Esophagus squamous epithelium (tissue), 5 donors: ENCODE measurements at regions of chr10 and their contacts with region 1.

Region 1: GRCh38 chr10:69515699-69516259 is 57.4 kb downstream of the NEUROG3 start:
- DNase-seq: no peak
- H3K4me3 ChIP-seq: no peak overlapping the region
- H3K27ac ChIP-seq: no peak overlapping the region
- H3K4me1 ChIP-seq: peaks cover 0 to 4% (median 0%) of the 10 kb centered on the region in 3 donors
- H3K27me3 ChIP-seq: no peaks in the 10 kb centered on the region
- CTCF ChIP-seq: peak; percentile 41 to 92 (median 77)
- POLR2A ChIP-seq: no peak

Region 2: DNA sequence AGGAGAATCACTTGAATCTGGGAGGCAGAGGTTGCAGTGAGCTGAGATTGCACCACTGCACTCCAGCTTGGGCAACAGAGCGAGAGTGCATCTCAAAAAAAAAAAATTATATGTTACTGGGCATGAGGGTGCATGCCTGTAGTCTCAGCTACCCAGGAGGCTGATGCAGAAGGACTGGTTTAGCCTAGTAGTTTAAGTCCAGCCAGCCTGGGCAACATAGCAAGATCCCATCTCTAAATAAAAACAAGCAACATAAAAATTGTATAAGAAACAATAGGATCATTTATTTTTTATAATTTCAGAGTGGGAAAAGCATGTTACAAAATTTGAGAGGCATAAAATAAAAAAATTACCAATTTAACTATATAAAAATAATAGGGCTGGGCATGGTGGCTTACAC is 810.2 kb before region 1 on chr10:
- intact Hi-C with region 1: no loop called
- DNase-seq: no peak
- H3K4me3 ChIP-seq: no peak overlapping the region
- H3K27ac ChIP-seq: no peak overlapping the region
- H3K4me1 ChIP-seq: no peaks in the 10 kb centered on the region
- H3K27me3 ChIP-seq: no peaks in the 10 kb centered on the region
- CTCF ChIP-seq: no peak
- POLR2A ChIP-seq: no peak

Region 3: GRCh38 chr10:69413221-69413865 is 102.4 kb before region 1 on chr10:
- intact Hi-C with region 1: no loop called
- DNase-seq: no peak
- H3K4me3 ChIP-seq: peak overlapping the region in 1 of 4 donors; percentile 58
- H3K27ac ChIP-seq: peak overlapping the region in 3 of 4 donors; percentile 65 to 94 (median 84)
- H3K4me1 ChIP-seq: peaks cover 5 to 42% (median 11%) of the 10 kb centered on the region in 3 donors
- H3K27me3 ChIP-seq: no peaks in the 10 kb centered on the region
- CTCF ChIP-seq: peak; percentile 31 to 69 (median 52)
- POLR2A ChIP-seq: no peak

Region 4: DNA sequence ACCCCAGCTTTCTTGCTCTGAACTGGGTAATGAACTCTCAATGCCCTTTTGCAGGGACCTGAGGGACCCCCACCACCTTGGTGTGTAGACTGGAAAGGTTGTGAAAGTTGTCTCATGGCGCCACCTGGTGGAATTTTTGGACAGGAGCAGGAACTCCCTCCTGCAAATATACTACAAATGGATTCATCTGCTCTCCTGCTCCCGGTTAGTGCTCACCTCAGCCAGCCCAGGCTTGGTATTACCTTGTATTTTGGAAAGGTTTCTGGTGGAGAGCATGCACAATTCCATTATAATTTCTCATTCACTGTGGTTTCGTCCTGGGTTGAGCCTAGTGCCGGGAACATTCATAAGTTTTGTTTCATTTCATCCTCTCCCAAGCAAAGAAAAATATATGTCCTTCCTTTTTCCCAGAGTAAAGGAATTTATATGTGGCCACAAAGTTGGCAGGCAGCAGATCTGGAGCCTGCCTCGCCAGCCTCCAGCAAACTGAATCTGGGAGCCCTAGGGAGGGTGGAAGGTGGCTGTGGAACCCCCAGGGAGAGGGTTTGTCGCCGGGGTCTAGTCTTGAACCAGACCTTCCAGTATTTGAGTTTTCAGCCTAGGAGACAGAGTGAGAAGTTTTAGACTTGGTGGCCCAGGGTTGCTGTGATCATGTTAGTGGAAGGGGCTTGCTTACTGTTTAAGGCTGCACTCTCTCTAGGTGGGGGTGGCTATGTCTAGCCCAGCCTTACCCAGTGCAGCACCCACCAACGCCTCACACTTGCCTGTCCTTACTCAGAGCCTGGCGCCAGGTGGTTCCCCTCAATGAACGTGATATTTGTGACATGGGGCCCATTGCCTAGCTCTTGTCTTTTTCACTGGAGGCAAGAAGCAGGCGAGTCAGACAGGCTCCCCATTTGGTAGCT is 123.8 kb after region 1 on chr10:
- intact Hi-C with region 1: loop called (anchors 5 kb)
- DNase-seq: peak; percentile 11
- H3K4me3 ChIP-seq: peak overlapping the region in 1 of 4 donors; percentile 12
- H3K27ac ChIP-seq: peak overlapping the region; percentile 68 to 77 (median 74)
- H3K4me1 ChIP-seq: peaks cover 8 to 46% (median 23%) of the 10 kb centered on the region in 3 donors
- H3K27me3 ChIP-seq: peaks cover 0 to 8% (median 0%) of the 10 kb centered on the region in 4 donors
- CTCF ChIP-seq: peak; percentile 68 to 90 (median 86)
- POLR2A ChIP-seq: no peak

Region 5: DNA sequence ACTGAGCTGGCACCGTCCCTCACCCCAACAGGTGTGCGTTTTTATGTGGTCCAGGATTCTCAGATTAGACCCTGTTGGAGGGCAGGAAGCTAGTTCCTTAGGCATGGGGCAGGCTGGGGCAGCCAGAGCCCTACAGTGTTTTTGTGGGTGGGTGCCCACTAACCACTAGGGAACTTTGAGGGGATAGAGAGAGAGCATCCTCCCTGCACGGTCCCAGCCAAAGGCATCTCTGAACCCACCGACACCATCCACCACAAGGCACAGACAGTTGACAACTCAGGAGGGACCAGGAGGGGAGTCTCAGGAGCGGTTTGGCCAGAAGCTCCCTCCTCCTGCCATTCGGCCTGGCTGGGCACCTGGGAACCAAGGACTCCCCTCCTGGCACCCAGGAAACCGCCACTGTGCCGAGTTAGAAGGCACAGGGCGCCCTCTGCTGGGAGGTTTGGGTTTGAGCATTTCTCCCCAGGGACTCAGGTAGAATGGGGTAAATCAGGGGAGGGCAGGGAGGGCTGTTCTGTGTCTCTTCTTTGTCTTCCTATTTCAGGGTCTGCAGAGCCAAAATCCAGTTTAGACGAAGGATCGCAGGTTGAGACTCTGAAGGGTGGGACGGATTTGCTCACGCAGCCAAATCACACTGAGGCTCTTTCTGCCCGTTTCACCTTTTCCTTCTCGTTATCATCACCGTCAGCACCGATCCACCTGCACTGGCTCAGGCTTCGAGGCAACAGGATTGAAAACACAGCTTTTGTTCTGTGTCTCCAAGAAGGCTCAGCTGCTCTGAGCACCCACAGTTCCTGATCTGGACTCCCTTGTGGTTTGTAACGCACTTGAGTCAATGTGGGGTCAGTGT is 201.2 kb after region 1 on chr10:
- intact Hi-C with region 1: loop called (anchors 10 kb)
- DNase-seq: no peak
- H3K4me3 ChIP-seq: no peak overlapping the region
- H3K27ac ChIP-seq: no peak overlapping the region
- H3K4me1 ChIP-seq: no peaks in the 10 kb centered on the region
- H3K27me3 ChIP-seq: peaks cover 0 to 16% (median 0%) of the 10 kb centered on the region in 4 donors
- CTCF ChIP-seq: peak; percentile 16 to 81 (median 67)
- POLR2A ChIP-seq: no peak